ENCODE measurements at regions of chr1 and their contacts with region 1.

Region 1: GRCh38 chr1:8560611-8561544 is 243.0 kb downstream of the SLC45A1 start:
- DNase-seq: no peak
- H3K4me3 ChIP-seq: no peak overlapping the region
- H3K27ac ChIP-seq: no peak overlapping the region
- H3K27me3 ChIP-seq: no peaks in the 10 kb centered on the region
- CTCF ChIP-seq: peak; percentile 95

Region 2: GRCh38 chr1:8571200-8571984 is 10.5 kb after region 1 on chr1:
- CTCF ChIA-PET with region 1: interaction called, 26 read pairs
- POLR2A ChIA-PET with region 1: no interaction called
- DNase-seq: no peak
- H3K4me3 ChIP-seq: no peak overlapping the region
- H3K27ac ChIP-seq: no peak overlapping the region
- H3K27me3 ChIP-seq: no peaks in the 10 kb centered on the region
- CTCF ChIP-seq: peak; percentile 61

Region 3: DNA sequence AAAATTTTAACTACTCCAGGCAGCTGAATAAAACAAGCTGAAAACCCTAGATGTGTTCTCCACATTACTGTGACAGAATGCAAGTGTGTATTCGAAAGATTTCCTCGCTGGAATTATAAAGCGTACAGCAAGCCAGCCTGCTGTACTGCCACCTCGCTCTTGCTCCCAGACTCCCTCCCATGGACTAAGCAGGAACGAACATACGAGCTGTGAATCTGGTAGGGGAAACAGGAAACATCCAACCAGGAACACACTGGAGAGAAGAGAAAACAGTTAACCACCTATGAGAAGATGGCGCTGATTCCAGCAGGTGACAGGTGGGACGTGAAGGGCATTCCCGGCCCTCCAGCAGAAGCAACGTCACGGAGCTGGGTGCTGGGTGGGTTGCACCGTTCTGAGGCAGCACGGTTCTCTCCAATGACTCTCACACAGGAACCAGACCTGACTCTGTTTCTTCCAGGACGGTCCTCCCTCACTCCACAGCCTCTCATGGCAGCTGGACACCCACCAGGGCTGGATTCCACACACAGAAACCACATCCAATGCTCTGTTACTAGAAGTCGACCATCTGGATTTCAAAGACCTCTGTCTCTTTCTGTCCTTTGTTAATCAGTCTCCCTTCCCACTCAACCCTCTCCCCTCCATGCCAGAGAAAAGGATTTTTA is 37.3 kb after region 1 on chr1:
- CTCF ChIA-PET with region 1: interaction called, 14 read pairs
- POLR2A ChIA-PET with region 1: no interaction called
- DNase-seq: no peak
- H3K4me3 ChIP-seq: peak overlapping the region; percentile 18; the same call in 1 of the 2 replicates
- H3K27ac ChIP-seq: peak overlapping the region; percentile 71
- H3K27me3 ChIP-seq: no peaks in the 10 kb centered on the region
- CTCF ChIP-seq: peak; percentile 63

Region 4: GRCh38 chr1:8661185-8662110 is 100.6 kb after region 1 on chr1:
- CTCF ChIA-PET with region 1: interaction called, 11 read pairs
- POLR2A ChIA-PET with region 1: no interaction called
- DNase-seq: peak; percentile 52
- H3K4me3 ChIP-seq: peak overlapping the region; percentile 21
- H3K27ac ChIP-seq: peak overlapping the region; percentile 87
- H3K27me3 ChIP-seq: no peaks in the 10 kb centered on the region
- CTCF ChIP-seq: no peak

Region 5: DNA sequence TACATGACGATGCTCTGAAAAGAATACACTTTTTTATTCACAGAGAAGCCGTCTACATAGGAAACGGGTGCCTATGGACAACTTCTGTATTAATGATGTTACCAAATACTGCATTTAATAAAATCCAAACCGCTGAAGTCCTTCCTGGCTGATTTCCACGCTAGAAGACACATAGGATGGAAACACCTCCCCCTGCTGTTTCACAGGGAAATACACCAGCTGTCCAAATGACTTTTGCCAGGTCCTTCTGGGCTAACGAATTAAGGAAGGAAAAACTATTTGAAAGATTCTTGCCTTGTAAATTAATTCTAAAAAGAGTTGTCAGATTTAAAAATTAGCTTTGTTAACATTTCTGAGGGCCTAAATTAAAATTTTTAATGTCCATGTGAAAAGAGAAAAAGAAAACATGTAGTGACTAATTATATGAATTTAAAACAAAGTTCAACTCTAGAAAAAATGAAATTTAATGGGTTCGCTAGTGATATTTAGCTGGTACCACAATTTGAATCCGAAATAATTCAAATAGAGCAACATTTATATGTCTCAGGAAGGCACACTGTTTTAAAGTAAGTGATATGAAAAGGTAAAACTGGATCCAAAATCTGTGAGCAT is 110.5 kb after region 1 on chr1:
- CTCF ChIA-PET with region 1: interaction called, 23 read pairs
- POLR2A ChIA-PET with region 1: no interaction called
- DNase-seq: peak; percentile 56
- H3K4me3 ChIP-seq: no peak overlapping the region
- H3K27ac ChIP-seq: no peak overlapping the region
- H3K27me3 ChIP-seq: no peaks in the 10 kb centered on the region
- CTCF ChIP-seq: peak; percentile 86

Measured in AG04450 (cell line).